ENCODE measurements at regions of chr4 and their contacts with region 1.

Region 1: GRCh38 chr4:139554893-139555704 is 920 bp downstream of the SETD7 start:
- DNase-seq: peak; percentile 90 to 92
- ATAC-seq: peak; percentile 67 to 71
- H3K4me3 ChIP-seq: peak overlapping the region; percentile 65 to 98 (median 87)
- H3K27ac ChIP-seq: peak overlapping the region; percentile 96 to 99 (median 98)
- H3K4me1 ChIP-seq: peaks cover 45 to 51% of the 10 kb centered on the region in 2 donors
- H3K27me3 ChIP-seq: no peaks in the 10 kb centered on the region
- CTCF ChIP-seq: peak in 1 of 5 experiments; percentile 7
- POLR2A ChIP-seq: peak; percentile 56 to 78

Region 2: DNA sequence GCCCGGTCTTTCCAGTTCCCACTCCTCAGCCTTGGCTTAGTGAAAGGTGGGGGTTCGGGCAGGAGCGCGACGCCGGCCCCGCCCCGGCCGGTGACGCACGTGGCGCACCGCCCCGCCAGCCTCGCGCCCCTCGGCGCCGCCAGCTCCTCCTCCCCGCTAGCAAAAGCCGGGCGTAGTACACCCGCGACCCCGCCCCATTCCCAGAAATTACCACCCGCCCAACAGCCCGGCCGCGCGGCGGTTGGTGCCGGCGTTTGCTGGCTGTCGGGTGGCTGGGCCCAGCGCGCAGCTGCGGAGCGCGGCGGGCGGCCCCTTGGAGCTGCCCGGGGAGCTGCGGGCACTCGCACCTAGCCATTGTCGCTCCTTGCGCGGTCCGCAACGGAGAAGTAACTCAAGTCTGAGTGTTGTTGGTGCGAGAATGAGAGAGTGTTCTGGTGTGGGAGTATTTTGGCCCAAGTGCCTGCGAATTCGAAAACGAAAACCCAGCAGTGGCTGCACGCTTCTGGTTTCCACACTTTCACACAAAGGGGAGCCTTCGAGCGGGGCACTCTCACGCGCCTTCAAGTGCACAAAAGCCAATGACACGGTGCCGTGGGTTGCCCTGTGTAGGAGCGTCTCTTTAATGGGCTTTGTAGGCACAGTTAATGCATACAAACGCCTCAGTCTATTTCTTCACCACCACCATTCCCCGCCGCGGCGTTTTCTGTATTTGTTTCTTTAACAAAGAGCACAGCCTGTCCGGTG is 377.1 kb before region 1 on chr4:
- in situ Hi-C with region 1: no loop called
- intact Hi-C with region 1: loop called (anchors 5 kb)
- DNase-seq: peak; percentile 93 to 95
- ATAC-seq: peak; percentile 70 to 71
- H3K4me3 ChIP-seq: peak overlapping the region; percentile 81 to 96 (median 88)
- H3K27ac ChIP-seq: peak overlapping the region; percentile 98 to 100 (median 100)
- H3K4me1 ChIP-seq: peaks cover 13 to 28% of the 10 kb centered on the region in 2 donors
- H3K27me3 ChIP-seq: no peaks in the 10 kb centered on the region
- CTCF ChIP-seq: no peak
- POLR2A ChIP-seq: peak; percentile 89 to 93

Region 3: DNA sequence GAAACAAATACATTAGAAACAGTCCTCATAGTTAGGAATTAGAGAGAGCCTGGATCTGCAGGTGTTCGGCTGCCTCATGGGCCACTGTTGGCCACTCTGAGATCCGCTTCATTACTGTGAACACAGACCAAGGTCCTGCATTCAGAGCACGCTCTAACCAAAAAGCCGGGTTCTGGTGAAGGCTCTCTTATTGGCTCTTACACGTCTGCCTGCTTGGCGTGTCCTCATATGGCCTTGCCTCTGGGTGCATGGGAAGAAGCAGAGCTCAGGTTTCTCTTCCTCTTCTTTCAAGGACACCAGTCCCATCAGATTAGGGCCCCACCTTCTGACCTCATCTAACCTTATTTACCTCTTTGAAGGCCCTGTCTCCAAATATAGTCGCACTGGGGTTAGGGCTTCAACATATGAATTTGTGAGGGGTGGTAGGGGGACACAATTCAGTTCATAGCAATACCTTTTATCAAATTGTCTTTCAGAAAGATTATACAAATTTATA is 341.0 kb before region 1 on chr4:
- in situ Hi-C with region 1: no loop called
- intact Hi-C with region 1: no loop called
- DNase-seq: peak; percentile 10 to 64
- ATAC-seq: peak; percentile 78 to 85
- H3K4me3 ChIP-seq: no peak overlapping the region
- H3K27ac ChIP-seq: peak overlapping the region in 2 of 4 donors; percentile 41
- H3K4me1 ChIP-seq: peaks cover 4 to 13% of the 10 kb centered on the region in 2 donors
- H3K27me3 ChIP-seq: no peaks in the 10 kb centered on the region
- CTCF ChIP-seq: no peak
- POLR2A ChIP-seq: no peak

Region 4: GRCh38 chr4:139416073-139416673 is 138.9 kb before region 1 on chr4:
- in situ Hi-C with region 1: no loop called
- intact Hi-C with region 1: loop called (anchors 5 kb)
- DNase-seq: no peak
- ATAC-seq: no peak
- H3K4me3 ChIP-seq: no peak overlapping the region
- H3K27ac ChIP-seq: no peak overlapping the region
- H3K4me1 ChIP-seq: no peaks in the 10 kb centered on the region
- H3K27me3 ChIP-seq: no peaks in the 10 kb centered on the region
- CTCF ChIP-seq: peak; percentile 51 to 76 (median 57)
- POLR2A ChIP-seq: no peak

Region 5: GRCh38 chr4:139501927-139502899 is 52.9 kb before region 1 on chr4:
- in situ Hi-C with region 1: no loop called
- intact Hi-C with region 1: loop called (anchors 2 kb)
- DNase-seq: no peak
- ATAC-seq: no peak
- H3K4me3 ChIP-seq: no peak overlapping the region
- H3K27ac ChIP-seq: no peak overlapping the region
- H3K4me1 ChIP-seq: peaks cover 0 to 4% of the 10 kb centered on the region in 2 donors
- H3K27me3 ChIP-seq: no peaks in the 10 kb centered on the region
- CTCF ChIP-seq: no peak
- POLR2A ChIP-seq: no peak

Region 6: DNA sequence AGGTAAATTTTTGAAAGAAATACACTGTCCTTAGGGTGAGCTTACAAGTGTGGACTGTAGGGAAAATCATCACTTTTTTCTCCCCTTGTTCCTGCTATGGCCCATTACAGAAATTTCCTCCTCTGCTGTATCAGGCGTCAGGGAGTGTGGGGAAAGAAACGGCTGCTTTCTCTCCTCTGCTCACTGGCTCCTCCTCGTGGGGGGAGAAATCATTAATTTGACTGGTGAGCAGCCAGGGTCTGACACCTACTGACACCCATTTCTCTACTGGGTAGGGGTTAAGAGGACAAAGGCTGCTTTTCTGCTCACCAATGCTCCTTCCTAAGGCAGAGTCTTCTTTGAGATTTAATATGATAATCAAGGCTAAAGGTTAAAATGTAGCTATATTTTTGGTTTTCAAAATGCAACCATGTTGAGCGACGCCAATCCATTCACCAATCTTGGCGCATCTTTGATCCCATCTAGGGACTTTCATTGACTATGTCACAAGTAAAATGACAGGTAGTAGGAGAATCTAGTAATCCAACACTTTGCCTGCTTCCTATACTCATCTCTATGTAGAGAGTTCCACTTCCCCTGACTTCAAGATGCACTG is 24.2 kb before region 1 on chr4:
- in situ Hi-C with region 1: no loop called
- intact Hi-C with region 1: loop called (anchors 1 kb)
- DNase-seq: peak in 1 of 2 donors; percentile 54
- ATAC-seq: peak; percentile 27 to 51
- H3K4me3 ChIP-seq: no peak overlapping the region
- H3K27ac ChIP-seq: peak overlapping the region; percentile 4 to 92 (median 50)
- H3K4me1 ChIP-seq: peaks cover 37 to 40% of the 10 kb centered on the region in 2 donors
- H3K27me3 ChIP-seq: no peaks in the 10 kb centered on the region
- CTCF ChIP-seq: peak; percentile 44 to 68 (median 64)
- POLR2A ChIP-seq: no peak